HEK293 (cell line): ENCODE measurements at regions of chr5 and their contacts with region 1.

Region 1: DNA sequence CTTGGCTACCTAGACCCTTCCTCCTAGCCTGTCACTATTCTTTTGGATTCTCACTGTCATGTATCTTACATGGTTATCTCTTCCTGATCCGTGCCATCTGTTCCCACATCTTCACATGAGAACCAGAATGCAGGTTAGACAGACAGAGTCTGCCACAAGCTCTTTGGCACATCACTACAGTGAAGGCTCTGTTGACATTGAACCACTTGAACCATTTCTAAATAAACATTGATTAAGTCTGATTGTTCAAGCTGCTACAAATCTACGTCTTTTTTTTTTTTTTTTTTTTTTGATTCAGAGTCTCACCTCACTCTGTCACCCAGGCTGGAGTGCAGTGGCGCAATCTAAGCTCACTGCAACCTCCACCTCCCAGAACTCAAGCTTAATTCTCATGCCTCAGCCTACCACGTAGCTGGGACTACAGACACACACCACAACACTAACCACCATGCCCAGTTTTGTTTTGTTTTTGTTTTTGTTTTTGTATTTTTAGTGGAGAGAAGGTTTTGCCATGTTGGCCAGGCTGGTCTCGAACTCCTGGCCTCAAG is 85.1 kb upstream of the LRRTM2 start:
- H3K4me3 ChIP-seq: no peak overlapping the region
- H3K27ac ChIP-seq: no peak overlapping the region
- H3K4me1 ChIP-seq: no peaks in the 10 kb centered on the region
- CTCF ChIP-seq: no peak

Region 2: DNA sequence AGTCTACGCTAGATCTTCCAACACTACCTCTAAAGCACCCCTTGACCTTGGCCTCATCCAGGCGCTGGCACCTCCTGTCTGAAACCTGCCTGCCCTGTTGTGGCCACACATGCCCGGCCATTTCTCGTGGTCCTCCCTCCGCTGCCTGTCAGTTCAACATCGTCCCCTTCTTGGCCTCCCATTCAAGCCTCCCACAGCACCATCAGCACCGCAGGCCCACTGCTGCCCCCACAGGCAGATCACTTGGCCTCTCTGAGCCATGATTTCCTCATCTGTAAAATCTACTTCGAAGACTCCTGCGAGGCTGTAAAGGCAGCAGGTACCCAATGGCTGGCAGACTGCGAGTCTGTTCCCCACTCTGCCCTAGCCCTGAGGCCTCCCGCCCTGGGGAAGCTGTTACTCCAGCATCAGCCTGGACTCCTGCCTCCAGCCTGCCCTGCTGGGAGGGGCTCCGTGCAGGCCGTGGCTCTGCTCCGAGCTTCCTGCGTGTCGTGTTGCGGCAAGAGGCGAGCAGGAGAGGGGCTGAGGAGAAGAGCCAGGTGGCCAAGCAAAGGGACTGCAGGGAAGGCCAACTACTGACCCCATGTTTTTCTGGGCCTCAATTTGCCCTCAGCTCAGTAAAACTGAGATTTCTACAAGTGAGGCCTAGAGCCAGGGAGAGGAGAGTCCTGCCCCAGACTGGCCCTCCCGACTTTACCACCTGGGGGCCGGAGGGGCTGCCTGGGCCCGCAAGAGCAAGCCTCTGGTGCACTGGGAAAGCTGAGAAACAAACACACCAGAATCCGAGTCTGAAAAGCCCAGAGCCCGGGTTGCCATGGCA is 14.6 kb before region 1 on chr5:
- CTCF ChIA-PET with region 1: interaction called, 3 read pairs
- POLR2A ChIA-PET with region 1: interaction called, 12 read pairs
- H3K4me3 ChIP-seq: no peak overlapping the region
- H3K27ac ChIP-seq: no peak overlapping the region
- H3K4me1 ChIP-seq: no peaks in the 10 kb centered on the region
- CTCF ChIP-seq: no peak

Region 3: GRCh38 chr5:139344177-139344576 is 384.0 kb after region 1 on chr5:
- CTCF ChIA-PET with region 1: no interaction called
- POLR2A ChIA-PET with region 1: no interaction called
- H3K4me3 ChIP-seq: no peak overlapping the region
- H3K27ac ChIP-seq: no peak overlapping the region
- H3K4me1 ChIP-seq: peaks cover 11% of the 10 kb centered on the region
- CTCF ChIP-seq: no peak